ENCODE measurements at regions of chr22 and their contacts with region 1.

Region 1: DNA sequence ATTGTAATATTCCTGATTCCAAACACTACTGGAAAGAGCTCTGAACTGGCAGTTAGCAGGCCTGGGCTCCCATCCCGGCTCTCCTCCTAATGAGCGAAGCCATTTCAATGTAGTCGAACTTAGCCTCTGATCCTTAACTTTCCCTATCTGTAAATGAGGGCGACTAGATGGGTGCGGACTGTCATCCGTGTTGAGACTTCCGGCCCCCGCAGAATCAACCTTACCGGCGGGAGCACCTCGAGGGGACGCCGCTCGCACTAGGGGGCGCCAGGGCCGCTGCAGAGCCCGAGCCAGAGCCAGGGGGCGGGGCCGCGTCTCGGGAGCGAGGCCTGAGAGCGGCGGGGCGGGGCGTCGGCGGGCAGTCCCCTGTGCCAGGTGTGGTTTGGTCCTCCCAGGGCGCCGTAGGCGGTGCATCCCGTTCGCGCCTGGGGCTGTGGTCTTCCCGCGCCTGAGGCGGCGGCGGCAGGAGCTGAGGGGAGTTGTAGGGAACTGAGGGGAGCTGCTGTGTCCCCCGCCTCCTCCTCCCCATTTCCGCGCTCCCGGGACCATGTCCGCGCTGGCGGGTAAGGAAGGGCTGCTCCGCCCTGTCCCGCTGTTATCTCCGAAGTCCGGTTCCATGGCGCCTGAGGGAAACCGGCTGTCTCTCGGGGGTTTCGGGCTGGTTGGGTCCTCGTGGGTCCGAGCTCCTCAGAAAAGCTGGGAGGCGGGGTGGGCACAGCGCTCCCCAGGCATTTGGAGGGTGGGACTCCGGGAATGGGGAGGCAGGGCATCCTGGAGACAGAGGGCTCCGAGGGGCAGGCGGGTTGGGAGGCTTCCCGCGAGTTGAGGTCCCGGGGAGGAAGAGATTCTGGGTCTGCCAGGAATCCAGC is at the start of gene LIMK2:
- DNase-seq: peak; percentile 89 to 100 (median 96)
- ATAC-seq: peak; percentile 98 to 99
- H3K4me3 Mint-ChIP-seq: peak within 1 kb of the TSS; percentile 82 to 90 (median 89)
- H3K27ac Mint-ChIP-seq: peak within 1 kb of the TSS in 9 of 10 donors; percentile 88 to 94 (median 93)
- H3K4me1 Mint-ChIP-seq: peaks cover 19 to 55% (median 49%) of the 10 kb centered on the region in 4 donors
- H3K27me3 Mint-ChIP-seq: no peaks in the 10 kb centered on the region
- polyA plus RNA-seq, gene LIMK2: 7.4 to 21.0 (median 12.7) TPM

Region 2: GRCh38 chr22:31230871-31231621 is 18.9 kb after region 1 on chr22:
- POLR2A ChIA-PET with region 1: interaction called, 30 read pairs
- DNase-seq: peak in 9 of 10 donors; percentile 34 to 77 (median 55)
- ATAC-seq: peak; percentile 89 to 90
- H3K4me3 Mint-ChIP-seq: peak overlapping the region in 5 of 10 donors; percentile 27 to 61 (median 44)
- H3K27ac Mint-ChIP-seq: peak overlapping the region in 9 of 10 donors; percentile 53 to 97 (median 75)
- H3K4me1 Mint-ChIP-seq: peaks cover 31 to 48% (median 41%) of the 10 kb centered on the region in 4 donors
- H3K27me3 Mint-ChIP-seq: no peaks in the 10 kb centered on the region

Region 3: DNA sequence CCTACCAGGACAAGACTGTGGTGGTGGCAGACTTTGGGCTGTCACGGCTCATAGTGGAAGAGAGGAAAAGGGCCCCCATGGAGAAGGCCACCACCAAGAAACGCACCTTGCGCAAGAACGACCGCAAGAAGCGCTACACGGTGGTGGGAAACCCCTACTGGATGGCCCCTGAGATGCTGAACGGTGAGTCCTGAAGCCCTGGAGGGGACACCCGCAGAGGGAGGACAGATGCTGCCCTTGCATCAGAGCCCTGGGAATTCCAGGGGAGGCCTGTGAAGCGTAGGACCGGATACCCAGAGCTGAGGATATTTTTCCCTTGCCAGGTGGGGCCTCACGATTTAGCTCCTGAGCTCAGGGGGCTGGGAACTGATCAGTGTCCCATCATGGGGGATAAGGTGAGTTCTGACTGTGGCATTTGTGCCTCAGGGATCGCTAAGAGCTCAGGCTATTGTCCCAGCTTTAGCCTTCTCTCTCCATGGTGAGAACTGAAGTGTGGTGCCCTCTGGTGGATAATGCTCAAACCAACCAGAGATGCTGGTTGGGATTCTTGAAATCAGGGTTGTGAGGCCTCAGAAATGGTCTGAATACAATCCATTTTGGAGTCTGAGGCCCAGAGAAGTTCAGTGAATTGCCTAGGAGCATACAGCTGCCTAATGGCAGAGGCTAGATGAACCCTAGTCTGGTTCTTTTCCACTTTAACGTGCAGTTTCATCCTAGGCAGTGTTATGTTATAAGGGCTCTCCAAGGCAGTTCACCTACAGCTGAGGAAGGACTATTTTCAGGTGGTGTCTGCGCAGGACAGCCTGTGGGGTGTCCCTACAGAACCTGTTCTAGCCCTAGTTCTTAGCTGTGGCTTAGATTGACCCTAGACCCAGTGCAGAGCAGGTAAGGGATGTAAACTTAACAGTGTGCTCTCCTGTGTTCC is 60.7 kb after region 1 on chr22:
- POLR2A ChIA-PET with region 1: interaction called, 112 read pairs
- DNase-seq: peak in 7 of 10 donors; percentile 49 to 77 (median 53)
- ATAC-seq: peak; percentile 65 to 66
- H3K4me3 Mint-ChIP-seq: peak overlapping the region in 8 of 10 donors; percentile 7 to 66 (median 24)
- H3K27ac Mint-ChIP-seq: peak overlapping the region; percentile 89 to 97 (median 94)
- H3K4me1 Mint-ChIP-seq: peaks cover 42 to 82% (median 73%) of the 10 kb centered on the region in 4 donors
- H3K27me3 Mint-ChIP-seq: no peaks in the 10 kb centered on the region

Region 4: GRCh38 chr22:31313366-31314147 is 101.5 kb after region 1 on chr22:
- POLR2A ChIA-PET with region 1: interaction called, 10 read pairs
- DNase-seq: peak; percentile 36 to 79 (median 64)
- ATAC-seq: peak; percentile 71 to 78
- H3K4me3 Mint-ChIP-seq: peak overlapping the region in 2 of 10 donors; percentile 1 to 3
- H3K27ac Mint-ChIP-seq: peak overlapping the region; percentile 15 to 92 (median 64)
- H3K4me1 Mint-ChIP-seq: peaks cover 7 to 29% (median 17%) of the 10 kb centered on the region in 4 donors
- H3K27me3 Mint-ChIP-seq: no peaks in the 10 kb centered on the region

Measured in naive thymus-derived CD8-positive, alpha-beta T cell (primary cell).